Natural killer cell (primary cell): ENCODE measurements at regions of chr7 and their contacts with region 1.

Region 1: GRCh38 chr7:37208528-37208927 is 240.1 kb downstream of the ELMO1 start:
- DNase-seq: peak in 1 of 2 donors; percentile 59
- ATAC-seq: peak; percentile 57 to 77 (median 59)
- H3K4me3 ChIP-seq: no peak overlapping the region
- H3K4me3 Mint-ChIP-seq: no peak overlapping the region
- H3K27ac ChIP-seq: no peak overlapping the region
- H3K27ac Mint-ChIP-seq: peak overlapping the region; percentile 33 to 46
- H3K4me1 ChIP-seq: no peaks in the 10 kb centered on the region
- H3K4me1 Mint-ChIP-seq: peaks cover 5 to 8% of the 10 kb centered on the region in 2 donors
- H3K27me3 ChIP-seq: no peaks in the 10 kb centered on the region
- H3K27me3 Mint-ChIP-seq: no peaks in the 10 kb centered on the region
- CTCF ChIP-seq: peak; percentile 52

Region 2: DNA sequence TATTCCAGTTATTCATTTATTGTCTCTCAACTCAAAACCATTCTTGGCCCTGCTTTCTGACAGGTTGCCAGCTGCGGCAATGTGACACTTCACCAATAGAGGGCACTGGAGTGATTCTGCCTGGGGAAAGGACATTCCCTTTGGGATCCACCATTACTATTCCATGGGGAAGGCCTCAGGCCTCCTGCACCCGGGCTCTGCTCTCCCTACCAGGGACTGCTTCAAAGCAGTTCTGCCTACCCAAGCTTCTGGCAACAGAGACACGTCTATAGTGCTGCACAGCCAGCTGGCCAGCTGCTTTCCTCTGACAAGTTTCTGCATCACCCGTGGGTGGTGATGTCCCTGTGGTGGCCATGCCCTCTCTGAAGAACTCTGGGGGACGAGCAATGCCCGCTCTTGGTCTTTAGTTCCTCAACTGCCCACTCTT is 76.3 kb after region 1 on chr7:
- intact Hi-C with region 1: no loop called
- DNase-seq: peak in 1 of 2 donors; percentile 64
- ATAC-seq: peak in 1 of 3 donors; percentile 49
- H3K4me3 ChIP-seq: no peak overlapping the region
- H3K4me3 Mint-ChIP-seq: no peak overlapping the region
- H3K27ac ChIP-seq: no peak overlapping the region
- H3K27ac Mint-ChIP-seq: peak overlapping the region in 1 of 2 donors; percentile 23
- H3K4me1 ChIP-seq: peaks cover 11% of the 10 kb centered on the region
- H3K4me1 Mint-ChIP-seq: peaks cover 58 to 64% of the 10 kb centered on the region in 2 donors
- H3K27me3 ChIP-seq: no peaks in the 10 kb centered on the region
- H3K27me3 Mint-ChIP-seq: no peaks in the 10 kb centered on the region
- CTCF ChIP-seq: peak; percentile 79

Region 3: DNA sequence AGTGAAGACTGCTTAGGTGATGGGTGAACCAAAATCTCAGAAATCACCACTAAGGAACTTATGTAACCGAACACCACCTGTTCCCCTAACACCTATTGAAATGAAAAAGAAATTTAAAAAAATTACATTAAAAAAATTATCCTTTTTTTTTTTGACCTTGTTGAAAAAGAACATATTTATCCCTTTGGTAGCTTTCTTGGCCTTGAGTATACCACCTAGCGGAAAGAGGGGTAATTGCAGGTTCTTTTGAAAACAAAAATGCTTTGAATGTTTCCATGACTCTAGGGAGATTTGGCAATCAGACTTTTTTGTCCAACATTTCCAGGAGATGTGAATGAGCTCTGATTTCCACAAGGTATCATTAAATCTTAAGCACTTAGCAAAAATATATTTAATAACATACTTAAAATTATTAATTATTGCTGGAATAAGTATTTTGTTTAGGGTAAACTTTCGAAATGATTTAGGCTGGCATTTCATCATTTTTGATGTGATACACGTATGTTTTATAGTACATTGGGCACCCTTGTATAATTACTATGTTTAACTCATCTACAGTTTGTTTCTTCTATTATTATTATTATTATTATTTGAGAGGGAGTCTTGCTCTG is 287.2 kb after region 1 on chr7:
- intact Hi-C with region 1: loop called (anchors 5 kb)
- DNase-seq: peak in 1 of 2 donors; percentile 60
- ATAC-seq: peak in 2 of 3 donors; percentile 40 to 51
- H3K4me3 ChIP-seq: no peak overlapping the region
- H3K4me3 Mint-ChIP-seq: no peak overlapping the region
- H3K27ac ChIP-seq: no peak overlapping the region
- H3K27ac Mint-ChIP-seq: no peak overlapping the region
- H3K4me1 ChIP-seq: no peaks in the 10 kb centered on the region
- H3K4me1 Mint-ChIP-seq: no peaks in the 10 kb centered on the region
- H3K27me3 ChIP-seq: no peaks in the 10 kb centered on the region
- H3K27me3 Mint-ChIP-seq: no peaks in the 10 kb centered on the region
- CTCF ChIP-seq: peak; percentile 94

Region 4: DNA sequence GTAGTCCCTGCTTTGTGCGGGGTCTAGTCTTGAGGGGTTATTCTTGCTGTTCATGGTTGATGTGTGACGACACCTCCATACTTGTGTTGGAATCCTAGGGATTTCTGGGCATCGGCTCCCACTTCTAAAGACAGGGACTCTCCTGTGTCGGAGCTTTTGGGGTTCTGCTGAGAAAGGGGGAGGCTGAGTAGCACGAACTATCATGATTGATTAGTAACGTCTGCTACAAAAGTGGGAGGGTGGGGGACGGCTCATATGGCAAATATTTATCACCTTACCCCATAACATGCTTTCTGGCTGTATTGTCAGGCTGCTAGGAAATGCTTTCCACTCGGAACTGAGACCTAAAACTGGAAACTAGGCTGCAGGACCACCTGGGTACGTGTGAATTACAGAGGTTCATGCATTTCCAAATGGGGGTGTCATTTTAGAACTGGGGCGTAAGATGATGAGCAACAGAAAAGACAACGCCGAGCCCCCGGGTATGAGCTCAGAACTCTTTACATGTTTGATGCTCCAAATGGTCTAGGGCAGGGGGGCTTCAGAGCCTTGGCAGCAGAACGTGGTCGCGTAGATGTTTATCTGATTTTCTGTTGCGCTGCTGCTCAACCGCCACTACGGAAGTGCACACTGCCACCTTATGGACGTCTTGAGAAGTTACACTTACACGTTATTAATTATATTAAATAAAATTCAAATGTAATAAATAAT is 624.7 kb after region 1 on chr7:
- intact Hi-C with region 1: loop called (anchors 2 kb)
- DNase-seq: peak; percentile 29 to 76
- ATAC-seq: peak; percentile 76 to 86 (median 79)
- H3K4me3 ChIP-seq: peak overlapping the region; percentile 38
- H3K4me3 Mint-ChIP-seq: peak overlapping the region; percentile 81
- H3K27ac ChIP-seq: no peak overlapping the region
- H3K27ac Mint-ChIP-seq: peak overlapping the region in 1 of 2 donors; percentile 84
- H3K4me1 ChIP-seq: peaks cover 10% of the 10 kb centered on the region
- H3K4me1 Mint-ChIP-seq: peaks cover 16 to 19% of the 10 kb centered on the region in 2 donors
- H3K27me3 ChIP-seq: no peaks in the 10 kb centered on the region
- H3K27me3 Mint-ChIP-seq: peaks cover 0 to 6% of the 10 kb centered on the region in 2 donors
- CTCF ChIP-seq: peak; percentile 83